ENCODE measurements at regions of chr1 and their contacts with region 1.

Region 1: DNA sequence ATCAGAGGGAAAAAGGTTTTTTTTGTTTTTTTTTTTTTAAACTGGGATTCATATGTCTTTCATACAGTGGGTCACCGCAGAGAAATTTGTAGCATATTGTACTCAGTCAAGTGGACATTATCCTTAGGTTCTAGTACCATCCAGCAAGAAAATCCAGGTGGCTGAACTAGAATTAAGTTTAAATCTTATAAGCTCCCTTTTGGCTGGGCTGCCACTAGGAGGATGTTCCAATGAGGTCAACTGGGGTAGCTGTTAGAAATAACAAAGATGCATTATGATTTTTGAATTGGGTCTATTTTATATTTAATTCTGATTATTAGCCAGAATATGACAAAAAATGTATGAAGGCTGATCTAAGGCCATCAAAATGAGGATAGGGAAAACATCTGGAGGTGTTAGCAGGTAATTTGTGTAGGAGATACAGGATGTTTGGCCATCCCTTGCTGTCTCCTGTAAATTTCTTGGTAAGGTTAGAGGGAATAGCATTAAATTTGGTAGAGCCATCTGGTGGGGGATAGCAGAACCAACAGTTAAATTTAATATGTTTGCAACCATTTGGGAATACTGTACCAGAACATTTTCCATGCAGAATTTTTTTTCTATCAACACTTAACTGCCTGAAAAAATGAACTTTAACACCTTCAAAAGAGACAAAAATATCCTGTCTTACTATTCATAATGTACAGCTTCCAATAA is 568.5 kb upstream of the B3GALT2 start:
- DNase-seq: peak in 1 of 14 experiments; percentile 19
- ATAC-seq: no peak
- H3K4me3 ChIP-seq: no peak overlapping the region
- H3K4me3 Mint-ChIP-seq: no peak overlapping the region
- H3K27ac ChIP-seq: no peak overlapping the region
- H3K27ac Mint-ChIP-seq: no peak overlapping the region
- H3K4me1 ChIP-seq: no peaks in the 10 kb centered on the region
- H3K4me1 Mint-ChIP-seq: peaks cover 4% of the 10 kb centered on the region
- H3K27me3 ChIP-seq: no peaks in the 10 kb centered on the region
- H3K27me3 Mint-ChIP-seq: no peaks in the 10 kb centered on the region
- CTCF ChIP-seq: peak; percentile 24

Region 2: GRCh38 chr1:193406901-193407300 is 348.0 kb before region 1 on chr1:
- CTCF ChIA-PET with region 1: no interaction called
- POLR2A ChIA-PET with region 1: no interaction called
- intact Hi-C with region 1: loop called in 1 of 2 experiments (anchors 5 kb)
- DNase-seq: peak in 4 of 14 experiments; percentile 18 to 70 (median 69)
- ATAC-seq: peak; percentile 74
- H3K4me3 ChIP-seq: no peak overlapping the region
- H3K4me3 Mint-ChIP-seq: no peak overlapping the region
- H3K27ac ChIP-seq: no peak overlapping the region
- H3K27ac Mint-ChIP-seq: peak overlapping the region; percentile 28
- H3K4me1 ChIP-seq: no peaks in the 10 kb centered on the region
- H3K4me1 Mint-ChIP-seq: peaks cover 40% of the 10 kb centered on the region
- H3K27me3 ChIP-seq: no peaks in the 10 kb centered on the region
- H3K27me3 Mint-ChIP-seq: no peaks in the 10 kb centered on the region
- CTCF ChIP-seq: peak; percentile 86

Region 3: GRCh38 chr1:193589597-193590040 is 165.3 kb before region 1 on chr1:
- CTCF ChIA-PET with region 1: no interaction called
- POLR2A ChIA-PET with region 1: no interaction called
- intact Hi-C with region 1: loop called in 1 of 2 experiments (anchors 10 kb)
- DNase-seq: no peak
- ATAC-seq: no peak
- H3K4me3 ChIP-seq: no peak overlapping the region
- H3K4me3 Mint-ChIP-seq: no peak overlapping the region
- H3K27ac ChIP-seq: no peak overlapping the region
- H3K27ac Mint-ChIP-seq: no peak overlapping the region
- H3K4me1 ChIP-seq: no peaks in the 10 kb centered on the region
- H3K4me1 Mint-ChIP-seq: peaks cover 26% of the 10 kb centered on the region
- H3K27me3 ChIP-seq: no peaks in the 10 kb centered on the region
- H3K27me3 Mint-ChIP-seq: no peaks in the 10 kb centered on the region
- CTCF ChIP-seq: no peak

Region 4: GRCh38 chr1:193905288-193906072 is 150.6 kb after region 1 on chr1:
- CTCF ChIA-PET with region 1: no interaction called
- POLR2A ChIA-PET with region 1: no interaction called
- intact Hi-C with region 1: no loop called
- DNase-seq: no peak
- ATAC-seq: no peak
- H3K4me3 ChIP-seq: no peak overlapping the region
- H3K4me3 Mint-ChIP-seq: no peak overlapping the region
- H3K27ac ChIP-seq: no peak overlapping the region
- H3K27ac Mint-ChIP-seq: no peak overlapping the region
- H3K4me1 ChIP-seq: no peaks in the 10 kb centered on the region
- H3K4me1 Mint-ChIP-seq: no peaks in the 10 kb centered on the region
- H3K27me3 ChIP-seq: no peaks in the 10 kb centered on the region
- H3K27me3 Mint-ChIP-seq: no peaks in the 10 kb centered on the region
- CTCF ChIP-seq: no peak